Activated CD4-positive, alpha-beta memory T cell treated with anti-CD3 and anti-CD28 coated beads for 36 hours (primary cell): ENCODE measurements at regions of chr22 and their contacts with region 1.

Region 1: DNA sequence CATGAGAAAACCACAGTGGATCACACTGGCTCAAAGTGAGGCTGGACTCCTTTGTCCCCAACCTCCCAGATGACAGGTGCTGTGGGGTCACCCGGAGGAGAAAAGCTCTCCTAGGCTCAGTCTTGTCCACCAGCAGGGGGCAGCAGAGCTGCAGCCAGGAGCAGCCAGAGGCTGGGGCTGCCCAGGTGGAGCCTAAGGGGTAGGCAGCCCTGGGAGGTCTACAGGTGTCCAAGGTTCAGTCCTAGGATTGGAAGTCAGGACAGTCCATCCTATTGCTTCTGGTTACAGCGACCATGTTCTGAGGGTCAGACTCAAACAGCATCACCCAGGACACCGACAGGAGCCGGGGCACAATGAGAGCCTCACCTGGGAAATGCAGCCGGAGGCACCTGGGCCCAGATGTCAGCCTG is 77.6 kb upstream of the IGLL5 start:
- DNase-seq: peak; percentile 80
- H3K4me3 Mint-ChIP-seq: no peak overlapping the region
- H3K27ac Mint-ChIP-seq: no peak overlapping the region
- H3K4me1 Mint-ChIP-seq: peaks cover 24% of the 10 kb centered on the region
- H3K27me3 Mint-ChIP-seq: no peaks in the 10 kb centered on the region

Region 2: DNA sequence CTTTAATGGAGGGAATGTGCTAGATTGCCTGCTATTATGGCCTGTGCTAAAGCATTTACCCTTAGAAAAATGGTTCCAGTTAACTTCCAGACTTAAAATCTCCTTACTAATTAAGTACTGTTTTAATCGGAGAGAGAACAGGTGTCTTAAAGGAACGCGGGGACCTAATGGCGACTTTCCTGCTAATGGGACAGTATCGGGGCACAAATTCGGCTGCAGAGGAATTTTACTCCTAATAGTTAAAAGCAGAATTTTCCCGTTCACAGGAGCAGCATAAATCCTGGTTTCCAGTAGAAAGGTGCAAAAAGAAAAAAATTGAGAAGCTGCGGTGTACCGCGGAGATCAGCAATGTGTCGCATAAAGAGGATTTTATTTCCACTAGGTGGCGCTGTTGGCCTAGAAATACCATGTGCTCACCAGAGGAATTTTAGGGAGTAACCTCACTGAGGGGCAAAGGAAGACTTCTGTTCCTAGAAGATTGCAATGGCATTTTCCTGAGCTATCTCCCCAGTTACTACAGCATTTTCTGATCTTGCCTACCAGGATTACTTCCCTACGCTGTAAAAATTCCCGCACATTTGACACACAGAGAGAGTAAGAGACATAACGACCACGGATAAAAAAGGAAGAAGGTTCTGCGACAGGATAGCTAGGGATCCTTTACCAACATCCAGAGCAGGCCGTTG is 346.0 kb before region 1 on chr22:
- CTCF ChIA-PET with region 1: no interaction called
- POLR2A ChIA-PET with region 1: no interaction called
- intact Hi-C with region 1: no loop called
- DNase-seq: peak; percentile 44
- H3K4me3 Mint-ChIP-seq: no peak overlapping the region
- H3K27ac Mint-ChIP-seq: no peak overlapping the region
- H3K4me1 Mint-ChIP-seq: no peaks in the 10 kb centered on the region
- H3K27me3 Mint-ChIP-seq: peaks cover 39% of the 10 kb centered on the region

Region 3: DNA sequence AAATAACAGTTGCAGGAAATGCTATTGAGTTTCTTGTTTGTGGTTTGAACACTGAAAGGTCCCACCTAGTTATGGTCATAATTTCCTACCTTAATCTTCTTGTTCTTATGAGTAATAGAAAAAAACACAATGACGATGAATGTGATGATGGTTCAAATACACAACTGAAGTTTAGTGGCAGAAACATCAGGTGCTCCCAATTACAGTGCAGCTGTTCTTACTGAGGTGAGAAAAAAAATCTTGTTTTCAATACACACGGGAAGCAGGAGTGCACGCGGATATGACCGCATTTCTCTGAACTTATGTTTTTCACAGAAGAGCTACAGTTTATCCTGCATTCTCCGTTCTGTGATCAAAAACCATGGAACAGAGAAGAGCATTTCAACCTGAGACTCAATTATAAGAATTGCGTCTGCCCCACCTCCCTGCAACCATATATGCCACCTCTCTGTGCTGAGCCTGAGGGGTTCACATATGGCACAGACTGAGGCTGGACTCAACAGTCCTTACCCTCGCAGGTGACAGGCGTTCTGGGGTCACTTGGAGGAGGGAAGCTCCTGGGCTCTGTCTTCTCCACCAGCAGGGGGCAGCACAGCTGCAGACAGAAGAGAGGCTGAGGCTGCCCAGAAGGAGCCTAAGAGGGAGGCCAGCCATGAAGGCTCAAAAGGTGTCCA is 22.1 kb before region 1 on chr22:
- CTCF ChIA-PET with region 1: interaction called, 56 read pairs
- POLR2A ChIA-PET with region 1: no interaction called
- intact Hi-C with region 1: no loop called
- DNase-seq: peak; percentile 77
- H3K4me3 Mint-ChIP-seq: no peak overlapping the region
- H3K27ac Mint-ChIP-seq: no peak overlapping the region
- H3K4me1 Mint-ChIP-seq: peaks cover 44% of the 10 kb centered on the region
- H3K27me3 Mint-ChIP-seq: no peaks in the 10 kb centered on the region

Region 4: DNA sequence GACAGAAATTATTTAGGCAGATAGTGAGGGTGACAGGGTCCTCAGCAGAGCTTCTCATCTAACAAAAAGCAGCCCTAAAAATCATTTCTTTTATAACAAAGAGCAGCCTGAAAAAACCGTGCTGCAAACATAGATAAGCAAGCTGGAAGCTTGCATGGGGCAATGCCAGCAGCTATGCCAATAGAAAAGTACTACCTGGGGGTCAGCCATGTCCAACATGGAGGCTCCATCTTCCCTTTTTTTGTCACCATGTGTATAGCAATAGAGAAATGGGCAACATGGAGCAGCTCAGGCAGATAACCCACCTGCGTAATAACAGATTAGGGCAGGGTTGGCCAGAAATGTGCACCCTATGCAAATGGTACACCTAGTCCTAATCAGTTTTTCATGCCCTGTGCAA is 20.2 kb after region 1 on chr22:
- CTCF ChIA-PET with region 1: interaction called, 21 read pairs
- POLR2A ChIA-PET with region 1: no interaction called
- intact Hi-C with region 1: no loop called
- DNase-seq: no peak
- H3K4me3 Mint-ChIP-seq: no peak overlapping the region
- H3K27ac Mint-ChIP-seq: no peak overlapping the region
- H3K4me1 Mint-ChIP-seq: peaks cover 9% of the 10 kb centered on the region
- H3K27me3 Mint-ChIP-seq: no peaks in the 10 kb centered on the region

Region 5: DNA sequence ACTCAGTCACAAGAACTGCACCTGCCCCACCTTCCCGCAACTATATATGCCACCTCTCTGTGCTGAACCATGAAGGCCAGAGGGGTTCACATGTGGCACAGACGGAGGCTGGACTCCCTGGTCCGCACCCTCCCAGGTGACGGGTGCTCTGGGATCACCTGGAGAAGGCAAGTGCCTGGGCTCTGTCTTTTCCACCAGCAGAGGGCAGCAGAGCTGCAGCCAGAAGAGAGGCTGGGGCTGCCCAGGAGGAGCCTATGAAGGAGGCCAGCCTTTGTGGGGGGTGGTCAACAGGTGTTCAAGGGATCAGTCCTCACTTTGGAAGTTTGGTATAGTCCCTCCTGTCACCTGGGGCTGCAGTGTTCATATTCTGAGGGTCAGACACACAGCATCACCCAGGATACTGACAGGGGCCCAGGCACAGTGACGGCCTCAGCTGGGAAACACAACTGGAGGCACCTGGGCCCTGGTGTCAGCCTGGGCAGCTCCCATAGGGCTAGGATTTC is 38.4 kb after region 1 on chr22:
- CTCF ChIA-PET with region 1: interaction called, 50 read pairs
- POLR2A ChIA-PET with region 1: no interaction called
- intact Hi-C with region 1: loop called (anchors 5 kb)
- DNase-seq: peak; percentile 78
- H3K4me3 Mint-ChIP-seq: no peak overlapping the region
- H3K27ac Mint-ChIP-seq: no peak overlapping the region
- H3K4me1 Mint-ChIP-seq: peaks cover 28% of the 10 kb centered on the region
- H3K27me3 Mint-ChIP-seq: no peaks in the 10 kb centered on the region

Region 6: GRCh38 chr22:22865311-22866072 is 55.5 kb after region 1 on chr22:
- CTCF ChIA-PET with region 1: interaction called, 14 read pairs
- POLR2A ChIA-PET with region 1: no interaction called
- intact Hi-C with region 1: loop called (anchors 5 kb)
- DNase-seq: peak; percentile 66
- H3K4me3 Mint-ChIP-seq: no peak overlapping the region
- H3K27ac Mint-ChIP-seq: peak overlapping the region; percentile 69
- H3K4me1 Mint-ChIP-seq: peaks cover 36% of the 10 kb centered on the region
- H3K27me3 Mint-ChIP-seq: no peaks in the 10 kb centered on the region

Region 7: DNA sequence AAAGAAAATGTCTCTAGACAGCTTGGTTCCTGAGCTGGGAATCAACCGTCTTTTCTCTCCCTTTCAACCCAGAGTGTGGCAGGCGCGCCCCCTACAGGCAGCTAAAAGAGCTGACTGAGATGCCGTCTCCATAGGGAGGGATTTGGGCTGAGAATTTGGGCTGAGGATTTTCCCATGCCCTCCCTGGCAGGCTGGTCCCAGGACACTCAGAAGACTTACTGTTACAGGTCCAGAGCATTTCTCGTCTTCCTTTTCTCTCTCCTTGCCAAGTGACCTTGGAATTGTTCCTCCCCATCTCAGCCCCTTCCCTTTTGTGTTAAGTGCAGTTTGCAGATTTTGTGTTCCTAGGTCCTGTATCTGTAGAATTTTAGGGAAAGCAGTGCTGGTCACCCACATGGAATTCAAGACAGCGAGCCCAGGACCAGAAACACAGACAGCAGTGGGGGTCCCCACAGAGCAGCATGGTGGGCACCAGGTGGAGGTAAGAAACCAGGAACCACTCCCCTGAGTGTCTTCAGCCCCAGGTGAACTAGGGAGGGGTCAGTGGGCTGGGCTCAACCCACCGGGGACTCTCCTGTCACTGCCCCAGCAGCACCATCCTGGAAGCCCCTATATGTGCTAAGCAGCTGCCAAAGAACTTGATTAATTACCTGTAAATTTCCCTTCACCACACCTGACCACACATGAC is 67.6 kb after region 1 on chr22:
- CTCF ChIA-PET with region 1: interaction called, 264 read pairs
- POLR2A ChIA-PET with region 1: interaction called, 3 read pairs
- intact Hi-C with region 1: loop called (anchors 1 kb)
- DNase-seq: peak; percentile 82
- H3K4me3 Mint-ChIP-seq: no peak overlapping the region
- H3K27ac Mint-ChIP-seq: no peak overlapping the region
- H3K4me1 Mint-ChIP-seq: no peaks in the 10 kb centered on the region
- H3K27me3 Mint-ChIP-seq: no peaks in the 10 kb centered on the region

Region 8: DNA sequence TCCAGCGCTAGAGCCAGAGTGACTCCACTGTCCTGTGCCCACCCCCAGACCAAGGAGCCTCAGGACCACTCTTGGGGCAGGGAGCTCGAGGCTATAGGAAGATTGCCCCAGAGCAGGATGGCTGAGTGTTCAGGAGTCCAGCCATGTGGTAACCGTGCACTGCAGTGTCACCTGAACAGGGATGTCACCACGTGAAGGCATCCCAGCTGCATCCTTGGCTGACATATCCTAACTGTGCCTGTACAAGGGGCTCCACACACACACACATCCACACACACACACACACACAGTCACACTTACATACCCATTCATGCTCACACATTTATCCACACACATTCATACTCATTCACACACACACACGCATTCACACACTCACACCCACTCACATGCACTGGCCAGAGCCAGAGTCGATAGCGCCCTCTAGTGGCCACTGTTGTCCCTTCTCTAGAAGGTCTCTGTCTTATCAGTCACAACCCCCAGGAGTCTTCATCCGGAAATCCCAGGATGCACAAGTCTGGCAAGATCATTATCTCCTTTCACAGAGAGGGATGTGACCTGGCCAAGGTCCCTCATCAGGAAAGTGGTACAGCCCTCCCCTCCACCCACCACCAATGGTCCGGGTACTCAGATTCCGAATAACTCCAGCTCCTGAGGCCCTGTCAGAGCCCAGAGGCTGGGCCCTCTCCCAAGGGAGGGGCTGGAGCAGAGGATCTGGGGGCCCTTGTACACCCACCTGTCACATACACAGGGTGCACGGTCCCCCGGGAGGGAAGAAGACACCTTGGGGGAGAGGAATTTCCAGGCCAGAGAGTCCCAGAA is 132.7 kb after region 1 on chr22:
- CTCF ChIA-PET with region 1: interaction called, 13 read pairs
- POLR2A ChIA-PET with region 1: no interaction called
- intact Hi-C with region 1: no loop called
- DNase-seq: peak; percentile 83
- H3K4me3 Mint-ChIP-seq: no peak overlapping the region
- H3K27ac Mint-ChIP-seq: no peak overlapping the region
- H3K4me1 Mint-ChIP-seq: peaks cover 5% of the 10 kb centered on the region
- H3K27me3 Mint-ChIP-seq: peaks cover 4% of the 10 kb centered on the region